Stomach (tissue), 19 donors: ENCODE measurements at regions of chr2 and their contacts with region 1.

Region 1: DNA sequence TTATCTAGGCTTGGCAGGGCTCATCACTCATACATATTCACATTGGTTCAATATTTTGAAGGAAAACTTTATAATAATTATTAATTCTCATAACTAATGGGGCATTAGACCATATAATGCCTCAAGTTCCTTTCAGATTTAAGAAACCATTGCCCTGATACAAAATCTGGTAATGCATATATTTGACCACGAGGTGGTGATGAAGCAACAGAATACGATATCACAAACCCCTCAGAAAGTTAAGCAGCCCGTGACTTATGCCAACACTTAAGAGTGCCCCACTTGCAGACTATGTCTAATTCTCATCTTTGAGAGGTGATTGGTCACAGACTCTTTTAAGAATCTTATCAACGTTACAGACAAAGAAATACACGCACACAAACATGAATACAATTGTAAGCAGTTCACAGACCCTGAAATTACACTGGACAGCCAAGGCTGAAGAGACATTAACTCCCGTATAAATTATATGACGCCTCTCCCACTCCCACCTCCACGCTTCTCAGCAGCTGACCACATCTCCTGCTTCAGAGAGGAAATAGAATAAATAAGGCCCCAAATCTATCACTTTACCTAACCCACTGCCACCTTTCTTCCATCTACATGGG is 20.7 kb upstream of the DNAH6 start:
- DNase-seq: peak in 1 of 2 donors; percentile 86
- H3K4me3 ChIP-seq: no peak overlapping the region
- H3K27ac ChIP-seq: no peak overlapping the region
- H3K4me1 ChIP-seq: no peaks in the 10 kb centered on the region
- H3K27me3 ChIP-seq: no peaks in the 10 kb centered on the region
- CTCF ChIP-seq: peak in 5 of 7 experiments; percentile 64 to 74 (median 66)
- EP300 ChIP-seq: no peak
- POLR2A ChIP-seq: no peak

Region 2: DNA sequence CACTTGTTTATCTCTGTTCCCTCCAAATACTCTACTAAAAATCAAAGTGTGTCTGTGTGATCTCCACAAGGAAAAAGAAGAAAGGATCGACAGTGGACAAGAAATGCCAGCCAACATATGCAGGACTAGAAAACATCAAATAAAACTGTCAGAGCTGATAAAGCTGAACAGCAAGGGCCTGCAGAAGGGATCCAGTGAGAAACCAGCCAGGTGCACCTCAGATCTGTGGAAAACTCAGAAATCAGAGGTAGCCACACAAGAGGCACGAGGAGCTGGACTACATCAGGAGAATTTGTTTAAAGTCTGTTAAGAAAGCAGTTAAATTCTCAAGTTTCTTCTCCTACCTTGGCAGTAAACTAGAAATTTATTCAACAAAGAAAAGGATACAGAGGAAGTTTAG is 171.8 kb before region 1 on chr2:
- intact Hi-C with region 1: no loop called
- DNase-seq: no peak
- H3K4me3 ChIP-seq: no peak overlapping the region
- H3K27ac ChIP-seq: no peak overlapping the region
- H3K4me1 ChIP-seq: no peaks in the 10 kb centered on the region
- H3K27me3 ChIP-seq: peaks cover 0 to 12% (median 0%) of the 10 kb centered on the region in 3 donors
- CTCF ChIP-seq: no peak
- EP300 ChIP-seq: no peak
- POLR2A ChIP-seq: no peak

Region 3: GRCh38 chr2:84619794-84620371 is 124.2 kb after region 1 on chr2:
- intact Hi-C with region 1: loop called (anchors 10 kb)
- DNase-seq: no peak
- H3K4me3 ChIP-seq: no peak overlapping the region
- H3K27ac ChIP-seq: no peak overlapping the region
- H3K4me1 ChIP-seq: no peaks in the 10 kb centered on the region
- H3K27me3 ChIP-seq: no peaks in the 10 kb centered on the region
- CTCF ChIP-seq: no peak
- EP300 ChIP-seq: no peak
- POLR2A ChIP-seq: no peak

Region 4: GRCh38 chr2:84757648-84758047 is 262.0 kb after region 1 on chr2:
- intact Hi-C with region 1: no loop called
- DNase-seq: no peak
- H3K4me3 ChIP-seq: no peak overlapping the region
- H3K27ac ChIP-seq: no peak overlapping the region
- H3K4me1 ChIP-seq: no peaks in the 10 kb centered on the region
- H3K27me3 ChIP-seq: no peaks in the 10 kb centered on the region
- CTCF ChIP-seq: no peak
- EP300 ChIP-seq: no peak
- POLR2A ChIP-seq: no peak

Region 5: DNA sequence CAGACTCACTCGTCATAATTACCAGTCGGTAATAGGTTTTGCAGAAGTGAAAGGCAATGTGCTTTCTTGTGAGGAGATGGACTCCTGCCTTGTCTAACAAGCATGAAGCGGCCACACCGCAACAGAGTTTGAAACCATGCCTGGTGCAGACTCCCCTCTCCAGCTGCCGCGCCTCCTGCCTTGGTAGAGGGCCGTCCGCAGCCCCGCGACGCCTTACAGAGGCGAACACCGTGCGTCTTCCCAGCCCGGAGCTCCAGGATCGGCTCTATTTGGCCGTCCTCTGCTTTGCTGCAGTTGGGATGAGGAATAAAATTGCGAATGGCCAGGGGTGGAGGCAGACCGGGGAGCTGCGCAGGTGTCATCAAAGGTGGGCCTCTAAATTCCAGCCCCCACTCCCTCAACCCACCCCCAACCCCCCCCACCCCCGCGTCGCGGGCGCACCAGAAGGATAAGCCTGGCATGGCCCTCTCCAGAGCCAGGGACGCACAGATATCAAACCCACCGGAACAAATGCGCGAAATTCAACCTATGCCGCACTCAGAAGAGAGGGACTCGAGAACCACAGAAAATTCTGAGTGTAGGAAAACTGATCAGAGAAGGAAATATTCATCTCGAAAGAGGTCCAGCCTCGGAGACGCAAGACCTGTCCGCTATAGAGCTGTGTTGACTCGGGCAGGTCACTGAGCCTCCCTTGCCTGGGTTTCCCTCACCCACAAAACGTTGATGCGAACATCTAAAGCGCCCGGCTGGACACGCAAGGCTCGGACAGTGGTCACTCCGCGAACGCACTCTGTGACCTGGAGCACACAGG is 384.1 kb after region 1 on chr2:
- intact Hi-C with region 1: loop called (anchors 10 kb)
- DNase-seq: peak in 1 of 2 donors; percentile 49
- H3K4me3 ChIP-seq: peak overlapping the region; percentile 48 to 76 (median 56)
- H3K27ac ChIP-seq: no peak overlapping the region
- H3K4me1 ChIP-seq: peaks cover 20 to 33% (median 30%) of the 10 kb centered on the region in 4 donors
- H3K27me3 ChIP-seq: peaks cover 0 to 53% (median 17%) of the 10 kb centered on the region in 3 donors
- CTCF ChIP-seq: no peak
- EP300 ChIP-seq: no peak
- POLR2A ChIP-seq: no peak